ENCODE measurements at regions of chr4 and their contacts with region 1.

Region 1: GRCh38 chr4:16264798-16265197 is 38.5 kb upstream of the TAPT1 start:
- DNase-seq: no peak
- H3K4me3 ChIP-seq: no peak overlapping the region
- H3K27ac ChIP-seq: no peak overlapping the region
- H3K4me1 ChIP-seq: no peaks in the 10 kb centered on the region
- H3K27me3 ChIP-seq: no peaks in the 10 kb centered on the region
- CTCF ChIP-seq: peak in 3 of 4 experiments; percentile 35 to 72 (median 68)
- POLR2A ChIP-seq: no peak

Region 2: GRCh38 chr4:15506464-15506863 is 758.3 kb before region 1 on chr4:
- intact Hi-C with region 1: no loop called
- DNase-seq: no peak
- H3K4me3 ChIP-seq: no peak overlapping the region
- H3K27ac ChIP-seq: no peak overlapping the region
- H3K4me1 ChIP-seq: no peaks in the 10 kb centered on the region
- H3K27me3 ChIP-seq: no peaks in the 10 kb centered on the region
- CTCF ChIP-seq: no peak
- POLR2A ChIP-seq: no peak

Region 3: GRCh38 chr4:15882675-15883086 is 382.1 kb before region 1 on chr4:
- intact Hi-C with region 1: loop called (anchors 5 kb)
- DNase-seq: peak; percentile 48
- H3K4me3 ChIP-seq: no peak overlapping the region
- H3K27ac ChIP-seq: no peak overlapping the region
- H3K4me1 ChIP-seq: no peaks in the 10 kb centered on the region
- H3K27me3 ChIP-seq: no peaks in the 10 kb centered on the region
- CTCF ChIP-seq: peak; percentile 62 to 85 (median 80)
- POLR2A ChIP-seq: no peak

Region 4: DNA sequence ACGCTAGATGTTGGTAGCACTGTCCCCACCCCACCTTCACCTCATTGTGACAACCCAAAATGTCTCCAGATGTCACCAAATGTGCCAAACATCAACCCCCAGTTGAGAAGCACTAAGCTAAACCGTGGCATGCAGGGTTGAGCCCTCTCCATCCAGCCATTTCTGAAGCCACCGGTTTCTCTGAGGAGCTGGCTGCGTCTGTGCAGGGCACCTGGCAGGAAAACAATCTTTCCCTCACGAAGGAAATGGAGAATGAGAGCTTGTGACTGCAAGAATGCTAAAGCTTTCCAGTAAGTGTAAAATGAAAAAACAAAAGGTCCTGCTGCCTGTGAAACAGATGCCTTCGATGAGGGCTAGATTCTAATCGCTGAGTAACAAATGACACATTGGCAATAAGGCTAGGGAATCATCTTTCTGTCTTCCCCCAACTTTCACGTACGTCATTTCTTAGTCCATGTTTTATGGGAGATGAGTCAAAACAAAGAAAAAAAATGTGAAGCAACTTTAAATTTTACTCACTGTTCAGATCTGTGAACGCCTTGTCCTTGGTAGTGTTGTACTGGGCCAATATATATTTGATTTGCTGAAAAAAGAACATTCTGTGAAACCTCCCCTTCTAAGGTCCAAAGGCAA is 240.9 kb before region 1 on chr4:
- intact Hi-C with region 1: loop called (anchors 2 kb)
- DNase-seq: no peak
- H3K4me3 ChIP-seq: no peak overlapping the region
- H3K27ac ChIP-seq: no peak overlapping the region
- H3K4me1 ChIP-seq: no peaks in the 10 kb centered on the region
- H3K27me3 ChIP-seq: no peaks in the 10 kb centered on the region
- CTCF ChIP-seq: no peak
- POLR2A ChIP-seq: no peak

Region 5: DNA sequence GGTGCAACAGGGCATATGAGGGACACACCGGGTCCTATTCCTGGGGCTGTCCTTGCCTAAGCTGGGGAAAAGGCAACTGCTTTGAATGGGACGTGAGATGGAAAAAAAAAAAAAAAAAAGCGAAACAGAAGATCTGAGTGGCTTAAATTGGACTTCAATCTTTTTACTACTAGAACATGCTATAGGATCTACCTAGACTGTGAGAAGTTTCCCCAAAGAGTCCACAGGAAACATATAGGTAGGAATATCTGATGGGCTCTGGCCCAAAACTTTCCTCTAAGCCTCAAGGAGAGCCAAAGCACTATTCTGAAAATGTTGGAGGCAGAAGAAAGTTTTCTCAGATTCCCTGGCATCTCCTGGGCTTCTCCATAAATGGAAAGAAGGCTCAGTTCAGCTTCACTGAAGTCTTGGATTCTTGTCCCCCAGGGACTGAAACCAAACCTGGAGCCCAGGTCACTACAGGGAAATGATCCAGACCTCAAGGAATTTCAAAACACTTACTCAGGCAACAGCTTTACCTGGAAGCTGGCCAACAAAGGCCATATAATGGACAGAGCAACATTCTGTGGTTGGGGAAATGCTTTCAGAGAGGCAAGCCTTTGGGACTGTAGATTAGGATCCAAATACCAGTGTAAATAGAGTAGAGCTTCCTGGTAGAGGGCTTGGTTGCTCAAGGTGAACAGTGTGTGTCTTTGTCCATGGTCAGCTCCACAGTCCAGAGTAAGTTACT is 124.1 kb before region 1 on chr4:
- intact Hi-C with region 1: no loop called
- DNase-seq: no peak
- H3K4me3 ChIP-seq: no peak overlapping the region
- H3K27ac ChIP-seq: no peak overlapping the region
- H3K4me1 ChIP-seq: no peaks in the 10 kb centered on the region
- H3K27me3 ChIP-seq: no peaks in the 10 kb centered on the region
- CTCF ChIP-seq: no peak
- POLR2A ChIP-seq: no peak

Region 6: GRCh38 chr4:16204505-16204904 is 60.3 kb before region 1 on chr4:
- intact Hi-C with region 1: loop called (anchors 5 kb)
- DNase-seq: no peak
- H3K4me3 ChIP-seq: no peak overlapping the region
- H3K27ac ChIP-seq: no peak overlapping the region
- H3K4me1 ChIP-seq: no peaks in the 10 kb centered on the region
- H3K27me3 ChIP-seq: no peaks in the 10 kb centered on the region
- CTCF ChIP-seq: no peak
- POLR2A ChIP-seq: no peak